ENCODE measurements at regions of chr12 and their contacts with region 1.

Region 1: DNA sequence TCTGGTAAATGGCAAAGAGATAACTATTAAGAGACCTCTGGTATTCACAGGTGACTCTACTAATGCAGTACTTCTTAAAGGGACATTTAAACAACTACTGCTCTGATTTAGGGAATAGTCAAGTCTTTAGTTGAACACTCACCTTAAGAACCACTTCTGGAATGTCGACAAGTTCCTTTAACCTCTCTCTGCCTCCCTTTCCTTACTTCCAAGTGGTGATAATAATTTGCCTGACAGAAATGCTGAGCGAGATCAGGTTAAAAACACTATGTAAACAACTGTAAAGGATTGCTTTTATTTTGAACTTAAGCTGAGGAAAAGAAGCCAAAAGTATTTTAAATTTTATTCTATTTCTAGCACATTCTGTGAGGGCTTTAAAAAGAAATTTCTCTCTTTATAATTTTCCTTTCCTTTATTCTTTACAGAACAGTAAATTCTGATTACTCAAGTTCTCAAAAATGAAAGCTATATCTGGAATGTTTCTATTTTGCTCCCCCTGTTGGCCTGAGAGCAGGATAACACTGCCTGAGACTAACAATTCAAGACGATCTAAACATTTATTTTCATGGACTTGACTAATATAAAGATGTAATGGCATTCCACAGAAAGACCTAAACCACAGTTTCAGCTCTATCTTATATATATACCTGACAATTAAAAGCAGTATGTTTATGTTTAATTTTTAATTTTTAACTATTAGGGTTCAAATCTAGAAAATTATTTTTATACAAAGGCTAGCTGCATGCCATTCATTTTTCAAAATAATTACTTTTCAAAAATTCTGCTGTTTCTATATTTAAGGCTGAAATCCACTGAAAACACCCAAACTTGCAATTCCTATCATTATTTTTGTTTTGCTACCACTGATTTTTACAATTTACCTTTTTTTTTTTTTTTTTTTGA is 29.2 kb downstream of the ZCCHC8 start:
- DNase-seq: peak in 1 of 2 experiments; percentile 64
- H3K4me3 ChIP-seq: no peak overlapping the region
- H3K4me3 Mint-ChIP-seq: no peak overlapping the region
- H3K27ac Mint-ChIP-seq: no peak overlapping the region
- H3K4me1 ChIP-seq: peaks cover 19% of the 10 kb centered on the region
- H3K4me1 Mint-ChIP-seq: no peaks in the 10 kb centered on the region
- H3K27me3 ChIP-seq: no peaks in the 10 kb centered on the region
- H3K27me3 Mint-ChIP-seq: no peaks in the 10 kb centered on the region
- CTCF ChIP-seq: peak; percentile 76 to 83

Region 2: GRCh38 chr12:122421821-122422729 is 49.5 kb before region 1 on chr12 and contains the start of gene CLIP1:
- CTCF ChIA-PET with region 1: interaction called, 11 read pairs
- POLR2A ChIA-PET with region 1: interaction called, 3 read pairs
- intact Hi-C with region 1: loop called (anchors 1 kb)
- DNase-seq: peak; percentile 81 to 86
- H3K4me3 ChIP-seq: peak within 1 kb of the TSS; percentile 66
- H3K4me3 Mint-ChIP-seq: peak within 1 kb of the TSS; percentile 89
- H3K27ac Mint-ChIP-seq: peak within 1 kb of the TSS; percentile 91
- H3K4me1 ChIP-seq: peaks cover 41% of the 10 kb centered on the region
- H3K4me1 Mint-ChIP-seq: peaks cover 14% of the 10 kb centered on the region
- H3K27me3 ChIP-seq: no peaks in the 10 kb centered on the region
- H3K27me3 Mint-ChIP-seq: no peaks in the 10 kb centered on the region
- CTCF ChIP-seq: peak; percentile 35 to 55
- total RNA-seq, gene CLIP1: 80.9 and 85.0 TPM in 2 replicates